ENCODE measurements at regions of chr17 and their contacts with region 1.

Region 1: GRCh38 chr17:35879773-35880654 is at the start of gene CCL5:
- DNase-seq: peak; percentile 77
- ATAC-seq: peak; percentile 87
- H3K4me3 Mint-ChIP-seq: peak within 1 kb of the TSS; percentile 82
- H3K27ac Mint-ChIP-seq: peak within 1 kb of the TSS; percentile 95
- H3K4me1 Mint-ChIP-seq: peaks cover 49% of the 10 kb centered on the region
- H3K27me3 Mint-ChIP-seq: no peaks in the 10 kb centered on the region
- CTCF ChIP-seq: no peak
- total RNA-seq, gene CCL5: 156 to 158 TPM

Region 2: GRCh38 chr17:35889818-35890763 is 10.1 kb after region 1 on chr17:
- CTCF ChIA-PET with region 1: interaction called, 4 read pairs
- POLR2A ChIA-PET with region 1: interaction called, 239 read pairs
- intact Hi-C with region 1: loop called (anchors 1 kb)
- DNase-seq: no peak
- ATAC-seq: no peak
- H3K4me3 Mint-ChIP-seq: no peak overlapping the region
- H3K27ac Mint-ChIP-seq: peak overlapping the region; percentile 77
- H3K4me1 Mint-ChIP-seq: peaks cover 62% of the 10 kb centered on the region
- H3K27me3 Mint-ChIP-seq: no peaks in the 10 kb centered on the region
- CTCF ChIP-seq: no peak

Region 3: DNA sequence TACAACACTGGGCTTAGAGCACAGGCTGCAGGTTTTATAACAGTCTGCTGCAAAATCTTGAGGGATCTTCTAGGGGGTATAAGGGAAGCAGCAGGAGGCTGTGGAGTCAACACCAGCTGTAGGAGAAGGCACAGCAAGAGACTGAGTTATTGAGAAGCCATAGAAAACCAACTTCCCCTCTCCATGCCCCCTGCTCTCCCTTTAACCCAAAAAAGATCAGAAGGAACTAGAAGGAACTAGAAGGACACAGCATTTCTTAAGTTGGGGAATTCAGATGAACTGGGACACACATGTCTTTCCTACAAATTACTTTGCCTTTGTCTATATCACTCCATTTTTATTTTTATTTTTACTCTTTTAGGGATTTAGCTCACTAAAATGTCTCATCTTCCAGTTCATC is 177.9 kb after region 1 on chr17:
- CTCF ChIA-PET with region 1: no interaction called
- POLR2A ChIA-PET with region 1: no interaction called
- intact Hi-C with region 1: no loop called
- DNase-seq: no peak
- ATAC-seq: no peak
- H3K4me3 Mint-ChIP-seq: no peak overlapping the region
- H3K27ac Mint-ChIP-seq: no peak overlapping the region
- H3K4me1 Mint-ChIP-seq: peaks cover 6% of the 10 kb centered on the region
- H3K27me3 Mint-ChIP-seq: peaks cover 8% of the 10 kb centered on the region
- CTCF ChIP-seq: no peak

Measured in activated CD8-positive, alpha-beta T cell treated with anti-CD3 and anti-CD28 coated beads for 36 hours (primary cell).